ENCODE measurements at regions of chr7 and their contacts with region 1.

Region 1: GRCh38 chr7:92768501-92769393 is 67.6 kb downstream of the CDK6 start:
- DNase-seq: peak; percentile 49
- ATAC-seq: peak; percentile 94
- H3K4me3 ChIP-seq: 0 out of 2 replicates have a peak overlapping the region, but pooled peaks have one; percentile 24
- H3K27ac ChIP-seq: peak overlapping the region; percentile 30
- H3K4me1 ChIP-seq: peaks cover 15% of the 10 kb centered on the region
- H3K27me3 ChIP-seq: no peaks in the 10 kb centered on the region
- CTCF ChIP-seq: no peak
- EP300 ChIP-seq: peak in 1 of 2 experiments; percentile 57; a peak in 1 of 4 replicates
- POLR2A ChIP-seq: no peak
- RAD21 ChIP-seq: peak; percentile 10; the same call in 1 of the 2 replicates

Region 2: DNA sequence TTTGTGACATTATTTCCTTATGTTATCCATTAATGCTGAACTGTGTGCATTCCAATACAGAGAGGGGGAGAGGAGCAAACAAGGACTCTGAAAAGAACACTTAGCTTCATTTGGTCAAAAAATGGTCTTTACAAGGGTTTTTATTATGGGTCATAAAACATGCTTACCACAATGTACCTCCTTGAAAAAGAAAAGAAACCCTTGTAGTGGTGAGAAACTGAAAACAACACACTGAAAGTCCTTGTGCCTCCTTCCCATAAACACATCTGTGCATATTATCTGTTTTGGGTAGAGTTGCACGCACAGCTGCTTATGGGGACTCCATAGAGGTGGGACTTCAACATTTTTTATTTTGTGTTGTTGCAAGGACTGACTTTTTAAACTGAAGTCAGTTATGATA is 31.0 kb before region 1 on chr7:
- CTCF ChIA-PET with region 1: interaction called, 4 read pairs
- POLR2A ChIA-PET with region 1: interaction called, 3 read pairs
- RAD21 ChIA-PET with region 1: interaction called, 3 read pairs
- SMC1A ChIA-PET with region 1: interaction called, 10 read pairs
- in situ Hi-C with region 1: no loop called
- intact Hi-C with region 1: no loop called
- DNase-seq: peak; percentile 64
- ATAC-seq: peak; percentile 89
- H3K4me3 ChIP-seq: no peak overlapping the region; the same call in 1 of the 2 replicates
- H3K27ac ChIP-seq: peak overlapping the region; percentile 85
- H3K4me1 ChIP-seq: peaks cover 20% of the 10 kb centered on the region
- H3K27me3 ChIP-seq: no peaks in the 10 kb centered on the region
- CTCF ChIP-seq: no peak
- EP300 ChIP-seq: peak; percentile 45 to 71; a peak in 2 of 4 replicates
- POLR2A ChIP-seq: no peak
- RAD21 ChIP-seq: peak; percentile 7; the same call in 1 of the 2 replicates